ENCODE measurements at regions of chr16 and their contacts with region 1.

Region 1: DNA sequence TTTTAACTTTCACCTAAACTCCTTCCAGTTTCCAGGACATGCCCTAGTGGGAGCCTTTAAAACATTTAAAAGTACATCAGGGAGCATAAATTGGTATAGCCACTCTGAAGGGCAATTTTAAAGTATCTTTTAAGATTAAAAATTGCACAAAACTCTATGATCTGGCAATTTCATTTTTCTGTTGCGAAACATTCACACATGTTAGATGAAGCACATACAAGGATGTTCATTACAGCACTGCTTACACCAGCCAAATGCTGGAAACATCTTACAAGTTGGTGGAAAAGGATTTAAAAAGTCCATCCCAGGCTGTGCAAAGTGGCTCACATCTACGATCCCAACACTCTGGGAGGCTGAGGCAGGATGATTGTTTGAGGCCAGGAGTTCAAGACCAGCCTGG is 26.4 kb upstream of the LONP2 start:
- DNase-seq: no peak
- H3K4me3 ChIP-seq: no peak overlapping the region
- H3K27ac ChIP-seq: no peak overlapping the region
- H3K4me1 ChIP-seq: no peaks in the 10 kb centered on the region
- H3K27me3 ChIP-seq: no peaks in the 10 kb centered on the region
- CTCF ChIP-seq: no peak

Region 2: GRCh38 chr16:47037746-47038458 is 1179.8 kb before region 1 on chr16:
- CTCF ChIA-PET with region 1: interaction called, 12 read pairs
- POLR2A ChIA-PET with region 1: no interaction called
- intact Hi-C with region 1: no loop called
- DNase-seq: peak; percentile 50 to 89
- H3K4me3 ChIP-seq: peak overlapping the region; percentile 71
- H3K27ac ChIP-seq: no peak overlapping the region
- H3K4me1 ChIP-seq: no peaks in the 10 kb centered on the region
- H3K27me3 ChIP-seq: no peaks in the 10 kb centered on the region
- CTCF ChIP-seq: peak; percentile 90

Region 3: DNA sequence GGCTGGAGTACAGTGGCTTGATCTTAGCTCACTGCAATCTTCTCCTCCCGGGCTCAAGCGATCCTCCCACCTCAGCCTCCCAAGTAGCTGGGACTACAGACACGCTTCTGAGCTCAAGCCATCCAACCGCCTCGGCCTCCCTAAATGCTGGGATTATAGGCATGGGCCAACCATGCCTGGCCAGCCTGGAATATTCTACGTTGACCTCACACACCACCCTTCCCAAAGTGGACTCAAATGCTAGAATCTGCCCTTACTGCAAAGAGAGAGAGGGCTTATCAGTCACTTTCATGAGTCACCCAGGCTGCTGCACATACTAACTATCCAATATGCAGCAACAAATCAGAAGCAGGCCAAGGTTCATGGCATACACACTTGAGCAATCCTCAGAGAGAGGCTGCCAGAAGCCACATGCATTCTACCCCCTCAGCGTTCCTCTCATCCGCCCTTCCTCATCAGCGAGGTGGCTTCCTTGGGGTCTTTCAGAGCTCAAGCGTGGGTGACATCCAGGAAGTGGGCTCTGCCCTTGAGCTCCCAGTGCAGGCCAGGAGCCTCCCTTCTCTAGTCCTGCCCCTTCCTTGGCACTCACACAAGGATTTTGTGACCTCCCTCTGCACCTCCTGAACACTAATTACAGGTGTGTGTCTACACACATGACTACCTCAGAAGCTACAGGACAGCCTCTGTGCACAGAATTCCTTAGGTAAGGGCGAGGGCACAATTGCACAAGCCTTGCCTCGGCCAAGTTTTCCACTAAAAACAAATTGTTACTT is 192.3 kb after region 1 on chr16:
- CTCF ChIA-PET with region 1: no interaction called
- POLR2A ChIA-PET with region 1: no interaction called
- intact Hi-C with region 1: no loop called
- DNase-seq: peak; percentile 65 to 94
- H3K4me3 ChIP-seq: peak overlapping the region; percentile 24; the same call in 1 of the 2 replicates
- H3K27ac ChIP-seq: peak overlapping the region; percentile 75
- H3K4me1 ChIP-seq: peaks cover 54% of the 10 kb centered on the region
- H3K27me3 ChIP-seq: no peaks in the 10 kb centered on the region
- CTCF ChIP-seq: no peak